Posterior vena cava (tissue), 2 donors: ENCODE measurements at regions of chr18 and their contacts with region 1.

Region 1: DNA sequence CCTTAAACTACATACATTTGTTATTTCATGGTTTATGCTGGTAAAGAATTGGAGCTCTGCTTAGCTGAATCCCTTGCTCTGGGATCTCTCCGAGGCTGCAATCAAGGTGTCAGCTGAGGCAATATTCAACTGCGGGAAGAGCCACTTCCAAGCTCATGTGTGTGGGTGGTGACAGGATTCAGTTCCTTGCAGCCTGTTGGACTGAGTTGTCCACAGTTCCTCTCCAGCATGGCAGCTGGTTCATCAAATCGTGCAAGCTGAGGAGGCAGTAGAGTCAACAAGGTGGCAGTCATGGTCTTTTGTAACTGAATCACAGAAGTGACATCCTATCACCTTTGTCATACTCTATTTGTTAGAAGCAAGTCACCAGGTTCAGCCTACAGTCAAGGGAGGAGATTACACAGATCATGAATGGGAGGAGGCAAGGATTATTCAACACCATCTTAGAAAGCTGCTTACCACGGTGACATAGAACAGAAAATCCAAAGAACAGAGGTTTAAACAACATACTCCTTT is 56.9 kb downstream of the CTIF start:
- DNase-seq: no peak

Region 2: DNA sequence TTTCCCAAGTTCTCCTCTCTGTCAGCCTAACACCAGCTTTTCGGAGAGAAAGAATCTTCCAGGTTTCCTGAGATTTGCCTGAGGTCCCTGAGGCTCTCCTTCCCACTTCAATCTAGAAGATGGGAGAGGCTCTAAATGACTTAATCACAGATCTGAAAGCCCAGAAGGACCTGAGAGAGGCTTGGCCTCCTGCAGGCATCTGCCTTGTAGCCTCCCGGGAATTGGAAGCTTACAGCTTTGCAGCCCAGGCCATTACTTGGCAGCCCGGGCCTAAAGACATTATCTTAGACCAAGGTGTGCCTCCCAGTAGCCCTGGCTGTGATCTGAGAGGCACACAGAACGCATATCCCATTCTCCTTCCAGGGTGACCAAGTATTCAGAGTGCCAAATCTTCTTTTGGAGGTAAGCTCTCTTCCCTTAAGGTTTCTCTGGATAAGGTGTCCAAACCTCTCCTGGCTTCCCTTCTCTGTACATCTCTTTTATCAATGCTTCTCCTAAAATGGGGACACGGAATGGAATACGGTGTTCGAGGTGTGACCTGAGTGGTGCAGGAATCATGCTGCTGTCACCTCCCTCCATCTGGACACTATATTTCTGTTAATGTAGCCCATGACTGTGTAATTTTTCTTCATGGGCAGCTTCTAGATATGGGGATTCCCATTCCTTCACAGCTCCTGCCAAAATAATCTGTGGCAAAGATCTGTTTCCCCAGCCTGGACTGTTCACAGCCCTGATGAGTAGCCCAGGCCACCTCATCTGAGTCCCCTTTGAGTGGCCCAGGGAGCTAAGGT is 41.0 kb before region 1 on chr18:
- intact Hi-C with region 1: loop called in 1 of 2 experiments (anchors 1 kb)
- DNase-seq: no peak

Region 3: GRCh38 chr18:48657447-48658120 is 61.8 kb after region 1 on chr18:
- intact Hi-C with region 1: loop called in 1 of 2 experiments (anchors 2 kb)
- DNase-seq: no peak